ENCODE measurements at regions of chr20 and their contacts with region 1.

Region 1: GRCh38 chr20:63009045-63009961 is 2.5 kb upstream of the BHLHE23 start:
- DNase-seq: peak; percentile 56
- H3K4me3 ChIP-seq: no peak overlapping the region
- H3K27ac ChIP-seq: no peak overlapping the region
- H3K4me1 ChIP-seq: no peaks in the 10 kb centered on the region
- H3K27me3 ChIP-seq: peaks cover 64 to 79% of the 10 kb centered on the region in 2 experiments
- CTCF ChIP-seq: peak; percentile 89 to 97
- POLR2A ChIP-seq: no peak

Region 2: GRCh38 chr20:62409931-62410745 is 599.2 kb before region 1 on chr20:
- CTCF ChIA-PET with region 1: no interaction called
- POLR2A ChIA-PET with region 1: no interaction called
- dilution Hi-C with region 1: no loop called
- intact Hi-C with region 1: no loop called
- DNase-seq: peak; percentile 28
- H3K4me3 ChIP-seq: no peak overlapping the region
- H3K27ac ChIP-seq: no peak overlapping the region
- H3K4me1 ChIP-seq: peaks cover 11% of the 10 kb centered on the region
- H3K27me3 ChIP-seq: no peaks in the 10 kb centered on the region
- CTCF ChIP-seq: peak; percentile 42 to 71
- POLR2A ChIP-seq: no peak

Region 3: DNA sequence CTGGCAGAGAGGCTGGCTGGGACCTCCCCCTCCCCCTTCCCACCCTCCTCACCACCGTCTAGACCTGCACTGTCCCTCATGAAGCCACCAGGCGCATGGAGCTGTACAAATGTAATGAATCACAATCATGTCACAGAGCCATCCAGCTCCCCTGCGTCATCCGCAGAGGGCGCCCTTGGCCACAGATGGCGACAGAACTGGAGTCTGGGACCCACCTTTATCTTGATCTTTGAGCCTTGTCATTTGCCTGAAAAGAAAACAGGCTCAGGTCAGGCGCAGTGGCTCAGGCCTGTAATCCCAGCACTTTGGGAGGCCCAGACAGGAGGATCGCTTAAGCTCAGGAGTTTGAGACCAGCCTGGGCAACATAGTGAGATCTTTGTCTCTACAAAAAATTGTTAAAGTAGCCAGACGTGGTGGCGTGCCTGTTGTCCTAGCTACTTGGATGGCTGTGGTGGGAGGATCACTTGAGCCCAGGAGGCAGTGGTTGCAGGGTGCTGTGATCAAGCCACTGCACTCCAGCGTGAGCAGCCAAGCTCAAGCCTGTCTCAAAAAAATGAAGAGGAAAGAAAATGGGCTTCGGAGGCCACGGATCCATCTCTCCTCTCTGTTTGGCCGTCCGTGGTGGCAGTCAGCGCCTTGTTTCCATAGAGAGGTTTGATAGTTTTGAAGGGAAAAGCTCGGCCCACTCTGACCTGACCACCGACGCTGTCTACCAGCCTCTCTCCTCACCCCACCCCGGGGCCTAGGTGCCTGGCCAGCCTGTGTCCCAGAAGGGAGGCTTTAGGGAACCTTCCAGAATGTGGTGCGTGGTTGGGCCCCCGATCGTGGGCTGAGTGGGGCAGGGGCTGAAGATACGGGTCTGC is 186.3 kb before region 1 on chr20:
- CTCF ChIA-PET with region 1: interaction called, 10 read pairs
- POLR2A ChIA-PET with region 1: no interaction called
- dilution Hi-C with region 1: no loop called
- intact Hi-C with region 1: no loop called
- DNase-seq: no peak
- H3K4me3 ChIP-seq: no peak overlapping the region
- H3K27ac ChIP-seq: no peak overlapping the region
- H3K4me1 ChIP-seq: peaks cover 15% of the 10 kb centered on the region
- H3K27me3 ChIP-seq: no peaks in the 10 kb centered on the region
- CTCF ChIP-seq: peak; percentile 10 to 17
- POLR2A ChIP-seq: no peak

Region 4: GRCh38 chr20:62875419-62876361 is 133.6 kb before region 1 on chr20:
- CTCF ChIA-PET with region 1: interaction called, 38 read pairs
- POLR2A ChIA-PET with region 1: no interaction called
- dilution Hi-C with region 1: no loop called
- intact Hi-C with region 1: loop called (anchors 1 kb)
- DNase-seq: peak; percentile 77
- H3K4me3 ChIP-seq: no peak overlapping the region
- H3K27ac ChIP-seq: no peak overlapping the region
- H3K4me1 ChIP-seq: peaks cover 9% of the 10 kb centered on the region
- H3K27me3 ChIP-seq: peaks cover 0 to 3% of the 10 kb centered on the region in 2 experiments
- CTCF ChIP-seq: peak; percentile 23 to 62
- POLR2A ChIP-seq: no peak

Region 5: GRCh38 chr20:62953839-62954703 is 55.2 kb before region 1 on chr20:
- CTCF ChIA-PET with region 1: interaction called, 16 read pairs
- POLR2A ChIA-PET with region 1: no interaction called
- dilution Hi-C with region 1: no loop called
- intact Hi-C with region 1: no loop called
- DNase-seq: peak; percentile 69
- H3K4me3 ChIP-seq: peak overlapping the region in 2 of 3 experiments; percentile 48 to 60
- H3K27ac ChIP-seq: peak overlapping the region; percentile 37
- H3K4me1 ChIP-seq: peaks cover 20% of the 10 kb centered on the region
- H3K27me3 ChIP-seq: no peaks in the 10 kb centered on the region
- CTCF ChIP-seq: no peak
- POLR2A ChIP-seq: peak; percentile 38

Region 6: GRCh38 chr20:62972270-62973032 is 36.9 kb before region 1 on chr20:
- CTCF ChIA-PET with region 1: interaction called, 35 read pairs
- POLR2A ChIA-PET with region 1: interaction called, 3 read pairs
- dilution Hi-C with region 1: no loop called
- intact Hi-C with region 1: loop called (anchors 1 kb)
- DNase-seq: peak; percentile 79
- H3K4me3 ChIP-seq: no peak overlapping the region
- H3K27ac ChIP-seq: no peak overlapping the region
- H3K4me1 ChIP-seq: no peaks in the 10 kb centered on the region
- H3K27me3 ChIP-seq: peaks cover 27 to 29% of the 10 kb centered on the region in 2 experiments
- CTCF ChIP-seq: peak; percentile 85 to 93
- POLR2A ChIP-seq: no peak

Region 7: DNA sequence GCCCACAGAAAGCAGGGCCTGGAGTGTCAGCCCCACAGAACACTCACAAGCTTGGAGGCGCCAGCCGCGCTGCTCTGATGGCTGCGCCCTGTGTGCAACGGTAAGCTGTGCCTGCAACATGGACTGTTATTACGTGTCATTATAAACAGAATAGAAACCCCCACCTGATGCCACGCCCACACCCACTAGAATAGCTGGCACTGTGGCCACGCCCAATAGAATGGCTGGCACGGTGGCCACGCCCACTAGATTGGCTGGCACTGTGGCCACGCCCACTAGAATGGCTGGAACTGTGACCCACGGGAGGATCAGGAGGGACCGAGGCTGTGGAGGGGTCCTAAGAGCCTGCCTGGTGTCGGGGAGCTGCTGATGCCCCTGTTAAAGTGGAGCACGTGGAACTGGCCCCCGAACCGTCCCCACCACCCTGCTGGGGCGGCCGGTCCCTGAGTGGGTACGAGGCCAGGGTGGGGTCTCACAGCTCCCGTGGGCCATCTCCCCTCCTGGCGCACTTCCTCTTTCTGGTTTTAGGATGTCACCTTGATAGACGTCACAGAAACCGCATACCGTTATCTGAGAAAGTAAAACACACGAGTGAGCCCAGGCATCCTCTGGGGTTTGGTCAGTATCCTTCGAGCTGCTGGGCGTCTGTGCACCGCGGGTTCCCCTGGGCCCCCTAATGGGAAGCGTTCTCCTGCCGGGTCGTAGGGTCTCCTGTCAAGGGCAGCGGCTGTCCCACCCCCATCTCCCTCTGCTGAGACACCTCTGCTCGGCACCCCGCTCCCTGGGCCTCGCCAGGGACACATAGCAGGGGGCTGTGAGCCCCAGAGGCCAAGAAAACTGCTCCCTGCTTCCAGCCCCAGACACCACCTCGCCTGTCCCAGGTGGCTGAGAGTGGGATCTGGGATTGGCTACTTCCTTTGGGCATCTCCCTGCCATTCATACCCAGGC is 31.4 kb before region 1 on chr20:
- CTCF ChIA-PET with region 1: interaction called, 12 read pairs
- POLR2A ChIA-PET with region 1: interaction called, 3 read pairs
- dilution Hi-C with region 1: no loop called
- intact Hi-C with region 1: no loop called
- DNase-seq: no peak
- H3K4me3 ChIP-seq: no peak overlapping the region
- H3K27ac ChIP-seq: no peak overlapping the region
- H3K4me1 ChIP-seq: no peaks in the 10 kb centered on the region
- H3K27me3 ChIP-seq: peaks cover 44 to 45% of the 10 kb centered on the region in 2 experiments
- CTCF ChIP-seq: no peak
- POLR2A ChIP-seq: no peak

Measured in endothelial cell of umbilical vein (primary cell).